Heart right ventricle (tissue), 16 donors: ENCODE measurements at regions of chr15 and their contacts with region 1.

Region 1: DNA sequence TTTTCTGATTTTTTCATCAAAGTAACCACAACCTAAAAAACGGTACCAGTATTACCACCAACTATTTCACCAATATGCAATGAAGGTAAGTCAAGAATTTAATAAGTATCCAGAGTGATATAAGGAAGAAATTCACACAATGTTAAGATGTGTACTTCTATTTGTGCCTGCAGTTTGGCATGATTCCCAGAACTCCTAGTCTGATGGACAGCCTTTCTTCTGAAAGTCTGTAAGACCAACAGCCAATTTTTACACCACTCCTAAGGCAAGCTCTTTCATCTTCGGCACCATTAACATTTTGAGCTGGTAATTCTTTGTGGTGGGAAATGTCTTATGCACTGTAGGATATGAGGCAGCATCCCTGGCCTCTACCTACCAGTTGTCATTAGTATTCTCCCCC is 108.3 kb downstream of the VPS13C start:
- DNase-seq: peak in 1 of 2 donors; percentile 22
- ATAC-seq: peak in 2 of 8 donors; percentile 47 to 74
- H3K4me3 ChIP-seq: no peak overlapping the region
- H3K27ac ChIP-seq: peak overlapping the region in 1 of 10 donors; percentile 6
- H3K4me1 ChIP-seq: peaks cover 0 to 9% (median 0%) of the 10 kb centered on the region in 9 donors
- H3K27me3 ChIP-seq: no peaks in the 10 kb centered on the region
- CTCF ChIP-seq: no peak

Region 2: DNA sequence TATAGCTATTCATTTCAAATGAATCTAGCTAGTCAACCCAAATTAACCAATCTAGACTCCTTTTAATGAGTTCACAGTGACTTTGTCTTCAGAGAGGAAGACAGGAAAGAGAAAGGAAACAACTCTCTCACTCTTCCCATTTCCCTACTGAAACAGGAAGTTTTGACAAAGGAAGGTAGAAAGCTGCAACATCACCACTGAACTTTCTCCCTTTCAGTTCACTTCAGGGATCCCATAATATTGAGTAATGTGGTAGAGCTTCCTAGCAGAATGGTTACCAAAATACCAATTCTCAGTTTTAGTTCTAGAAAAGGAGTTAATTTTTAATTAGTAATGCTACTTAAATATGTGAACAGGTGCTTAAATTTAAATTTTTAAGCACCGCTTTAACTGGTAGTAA is 100.8 kb after region 1 on chr15:
- intact Hi-C with region 1: loop called in 1 of 10 experiments (anchors 1 kb)
- DNase-seq: no peak
- ATAC-seq: no peak
- H3K4me3 ChIP-seq: no peak overlapping the region
- H3K27ac ChIP-seq: no peak overlapping the region
- H3K4me1 ChIP-seq: peaks cover 0 to 56% (median 26%) of the 10 kb centered on the region in 9 donors
- H3K27me3 ChIP-seq: no peaks in the 10 kb centered on the region
- CTCF ChIP-seq: no peak

Region 3: GRCh38 chr15:62063851-62064635 is 112.1 kb after region 1 on chr15:
- intact Hi-C with region 1: no loop called
- DNase-seq: no peak
- ATAC-seq: no peak
- H3K4me3 ChIP-seq: no peak overlapping the region
- H3K27ac ChIP-seq: no peak overlapping the region
- H3K4me1 ChIP-seq: peaks cover 5 to 48% (median 24%) of the 10 kb centered on the region in 9 donors
- H3K27me3 ChIP-seq: peaks cover 0 to 30% (median 0%) of the 10 kb centered on the region in 7 donors
- CTCF ChIP-seq: no peak

Region 4: DNA sequence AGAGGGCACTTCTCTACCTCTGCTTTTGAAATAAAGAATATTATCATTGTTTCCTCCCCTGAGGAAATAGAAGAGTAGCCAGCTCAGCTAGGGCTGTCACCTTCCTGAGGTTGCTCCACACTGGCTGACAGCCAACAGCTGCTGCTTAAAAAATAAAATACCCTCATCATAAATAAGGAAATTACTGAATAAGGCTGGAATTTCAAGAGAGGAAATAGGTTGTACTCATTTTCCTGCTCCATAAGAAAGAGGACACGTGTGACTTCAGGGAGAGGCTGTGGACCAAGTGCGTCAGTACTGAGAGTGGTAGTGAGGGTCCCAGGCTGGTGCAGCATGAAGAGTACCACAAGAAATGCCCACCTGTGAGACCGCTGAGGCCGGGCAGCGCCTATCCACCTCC is 221.3 kb after region 1 on chr15:
- intact Hi-C with region 1: no loop called
- DNase-seq: peak; percentile 38 to 81
- ATAC-seq: peak; percentile 79 to 94 (median 92)
- H3K4me3 ChIP-seq: peak overlapping the region in 8 of 10 donors; percentile 6 to 51 (median 28)
- H3K27ac ChIP-seq: peak overlapping the region; percentile 20 to 91 (median 75)
- H3K4me1 ChIP-seq: peaks cover 0 to 43% (median 16%) of the 10 kb centered on the region in 9 donors
- H3K27me3 ChIP-seq: peaks cover 0 to 10% (median 0%) of the 10 kb centered on the region in 7 donors
- CTCF ChIP-seq: no peak